ENCODE measurements at regions of chr2 and their contacts with region 1.

Region 1: DNA sequence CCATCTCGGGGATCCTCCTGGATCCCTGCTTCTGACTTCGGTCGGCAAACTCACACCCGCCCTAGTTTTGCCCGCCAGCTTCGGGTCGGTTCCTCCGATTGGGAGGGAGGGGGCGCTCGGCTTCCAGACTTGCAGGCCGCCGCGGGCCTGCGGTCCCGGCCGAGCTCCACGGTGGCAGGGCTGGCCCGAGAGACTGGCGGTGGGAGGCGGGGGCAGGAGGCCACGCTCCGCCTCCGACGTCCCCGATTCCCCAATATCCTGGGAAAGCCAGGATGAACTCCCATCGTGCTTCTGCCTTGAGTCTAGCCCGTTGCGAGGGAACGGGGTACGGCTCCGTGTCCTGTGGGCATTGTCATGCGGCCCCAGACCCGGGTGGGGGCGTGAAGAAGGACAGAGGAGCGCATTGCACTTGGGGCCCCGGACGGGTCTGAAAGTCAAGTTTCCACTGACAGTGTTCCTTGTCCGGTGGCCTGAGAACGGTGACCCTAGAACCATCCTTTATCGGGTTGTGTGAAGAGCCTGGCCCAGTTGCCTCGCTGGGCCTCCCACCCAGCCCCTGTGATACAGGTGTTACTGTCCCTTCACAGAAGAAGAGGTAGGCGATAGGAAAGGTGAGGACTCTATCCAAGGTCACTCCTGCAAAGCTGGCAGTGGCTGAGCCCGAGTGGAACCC is 2.4 kb upstream of the INHBB start:
- DNase-seq: peak; percentile 84
- ATAC-seq: peak; percentile 71
- H3K4me3 Mint-ChIP-seq: peak overlapping the region; percentile 21
- H3K27ac Mint-ChIP-seq: no peak overlapping the region
- H3K4me1 Mint-ChIP-seq: peaks cover 22% of the 10 kb centered on the region
- H3K27me3 Mint-ChIP-seq: peaks cover 48% of the 10 kb centered on the region

Region 2: DNA sequence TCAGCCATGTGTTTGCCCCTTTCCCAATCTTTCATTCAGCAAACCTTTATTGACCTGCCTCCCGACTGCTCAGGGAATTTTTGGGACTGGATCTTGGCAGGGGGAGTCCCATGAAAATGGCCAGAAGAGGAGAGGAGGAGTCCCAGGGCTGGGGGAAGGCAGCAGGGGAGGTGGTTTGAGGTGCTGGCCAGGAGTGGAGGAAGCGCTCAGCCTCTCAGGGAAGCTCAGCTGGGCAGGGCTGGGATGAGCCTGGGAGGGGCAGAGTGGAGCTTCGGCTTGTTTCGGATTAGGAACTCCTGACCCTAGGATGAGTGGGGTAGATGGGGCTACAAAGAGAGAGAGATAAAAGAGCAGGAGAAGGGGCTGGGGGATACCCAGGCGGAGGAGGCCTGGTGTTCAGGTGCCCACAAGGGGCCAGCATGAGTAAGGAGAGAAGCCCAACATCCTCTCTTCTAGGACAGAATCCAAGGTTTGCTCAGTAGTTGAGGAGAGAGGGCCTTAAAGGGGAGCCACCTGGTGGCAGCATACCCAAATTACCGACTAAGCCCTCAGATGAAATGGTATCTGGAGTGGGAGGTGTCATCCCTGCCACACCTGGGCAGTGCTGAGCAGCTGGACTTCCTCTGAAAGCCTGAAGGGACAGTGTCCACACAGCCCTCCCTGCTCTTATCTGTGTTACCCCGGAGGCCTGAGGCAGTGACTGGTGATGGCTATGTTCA is 93.5 kb after region 1 on chr2:
- CTCF ChIA-PET with region 1: interaction called, 4 read pairs
- POLR2A ChIA-PET with region 1: no interaction called
- intact Hi-C with region 1: loop called (anchors 1 kb)
- DNase-seq: peak; percentile 58
- ATAC-seq: peak; percentile 33
- H3K4me3 Mint-ChIP-seq: no peak overlapping the region
- H3K27ac Mint-ChIP-seq: no peak overlapping the region
- H3K4me1 Mint-ChIP-seq: peaks cover 2% of the 10 kb centered on the region
- H3K27me3 Mint-ChIP-seq: peaks cover 20% of the 10 kb centered on the region

Region 3: DNA sequence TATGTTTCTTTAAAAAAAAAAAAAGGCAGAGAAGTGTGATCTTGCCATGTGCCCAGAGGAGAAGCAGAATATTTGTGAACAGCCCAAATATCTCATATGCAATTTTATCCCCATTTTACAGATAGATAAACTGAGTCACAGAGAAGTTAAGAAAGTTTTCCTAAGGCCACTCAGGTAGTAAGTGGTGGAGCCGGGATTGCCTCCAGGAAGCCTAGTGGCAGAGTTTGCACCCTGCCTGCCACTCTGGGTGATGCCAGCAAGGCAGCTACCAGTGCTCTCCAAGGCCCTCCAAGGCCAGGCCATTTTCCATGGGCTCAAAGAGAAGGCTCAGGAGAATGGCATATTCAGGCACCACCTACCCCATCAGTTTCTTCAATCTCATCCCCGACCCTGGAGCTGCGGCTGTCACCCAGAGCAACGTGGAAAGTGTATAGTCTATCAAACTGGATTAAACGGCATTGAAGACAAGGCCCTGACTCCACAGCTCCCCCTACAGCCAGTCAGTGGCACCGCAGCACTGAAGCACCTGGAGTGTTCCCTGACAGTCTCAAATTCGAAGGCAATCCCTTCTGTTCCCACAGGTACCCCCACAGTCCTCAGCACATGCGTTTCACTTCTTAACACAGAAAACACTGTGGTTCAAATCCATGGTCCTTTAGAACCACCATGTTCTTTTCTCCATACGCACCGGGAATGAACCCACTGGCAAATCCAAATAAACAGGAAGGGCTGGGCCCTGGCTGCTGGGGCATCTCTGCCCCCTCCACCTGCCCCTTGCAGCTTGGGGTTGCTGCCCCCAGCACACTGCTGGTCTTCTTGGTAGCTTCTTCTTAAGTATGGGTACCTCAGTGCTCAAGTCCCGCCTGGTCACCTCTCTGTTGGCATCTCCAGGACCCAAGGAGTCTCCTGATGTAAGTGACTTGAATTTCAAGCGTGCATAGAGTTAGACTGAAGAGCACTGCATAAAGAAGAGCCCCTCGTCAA is 177.7 kb after region 1 on chr2:
- CTCF ChIA-PET with region 1: no interaction called
- POLR2A ChIA-PET with region 1: no interaction called
- intact Hi-C with region 1: loop called (anchors 1 to 10 kb)
- DNase-seq: peak; percentile 65
- ATAC-seq: peak; percentile 76
- H3K4me3 Mint-ChIP-seq: no peak overlapping the region
- H3K27ac Mint-ChIP-seq: no peak overlapping the region
- H3K4me1 Mint-ChIP-seq: no peaks in the 10 kb centered on the region
- H3K27me3 Mint-ChIP-seq: peaks cover 28% of the 10 kb centered on the region

Region 4: GRCh38 chr2:120680136-120680761 is 336.7 kb after region 1 on chr2:
- CTCF ChIA-PET with region 1: interaction called, 9 read pairs
- POLR2A ChIA-PET with region 1: no interaction called
- intact Hi-C with region 1: loop called (anchors 1 to 2 kb)
- DNase-seq: peak; percentile 90
- ATAC-seq: peak; percentile 94
- H3K4me3 Mint-ChIP-seq: peak overlapping the region; percentile 47
- H3K27ac Mint-ChIP-seq: no peak overlapping the region
- H3K4me1 Mint-ChIP-seq: peaks cover 3% of the 10 kb centered on the region
- H3K27me3 Mint-ChIP-seq: peaks cover 22% of the 10 kb centered on the region

Region 5: GRCh38 chr2:121076885-121077549 is 733.4 kb after region 1 on chr2:
- CTCF ChIA-PET with region 1: interaction called, 3 read pairs
- POLR2A ChIA-PET with region 1: no interaction called
- intact Hi-C with region 1: loop called in 1 of 2 experiments (anchors 5 kb)
- DNase-seq: peak; percentile 87
- ATAC-seq: peak; percentile 60
- H3K4me3 Mint-ChIP-seq: no peak overlapping the region
- H3K27ac Mint-ChIP-seq: no peak overlapping the region
- H3K4me1 Mint-ChIP-seq: peaks cover 2% of the 10 kb centered on the region
- H3K27me3 Mint-ChIP-seq: peaks cover 23% of the 10 kb centered on the region